ENCODE measurements at regions of chr22 and their contacts with region 1.

Region 1: DNA sequence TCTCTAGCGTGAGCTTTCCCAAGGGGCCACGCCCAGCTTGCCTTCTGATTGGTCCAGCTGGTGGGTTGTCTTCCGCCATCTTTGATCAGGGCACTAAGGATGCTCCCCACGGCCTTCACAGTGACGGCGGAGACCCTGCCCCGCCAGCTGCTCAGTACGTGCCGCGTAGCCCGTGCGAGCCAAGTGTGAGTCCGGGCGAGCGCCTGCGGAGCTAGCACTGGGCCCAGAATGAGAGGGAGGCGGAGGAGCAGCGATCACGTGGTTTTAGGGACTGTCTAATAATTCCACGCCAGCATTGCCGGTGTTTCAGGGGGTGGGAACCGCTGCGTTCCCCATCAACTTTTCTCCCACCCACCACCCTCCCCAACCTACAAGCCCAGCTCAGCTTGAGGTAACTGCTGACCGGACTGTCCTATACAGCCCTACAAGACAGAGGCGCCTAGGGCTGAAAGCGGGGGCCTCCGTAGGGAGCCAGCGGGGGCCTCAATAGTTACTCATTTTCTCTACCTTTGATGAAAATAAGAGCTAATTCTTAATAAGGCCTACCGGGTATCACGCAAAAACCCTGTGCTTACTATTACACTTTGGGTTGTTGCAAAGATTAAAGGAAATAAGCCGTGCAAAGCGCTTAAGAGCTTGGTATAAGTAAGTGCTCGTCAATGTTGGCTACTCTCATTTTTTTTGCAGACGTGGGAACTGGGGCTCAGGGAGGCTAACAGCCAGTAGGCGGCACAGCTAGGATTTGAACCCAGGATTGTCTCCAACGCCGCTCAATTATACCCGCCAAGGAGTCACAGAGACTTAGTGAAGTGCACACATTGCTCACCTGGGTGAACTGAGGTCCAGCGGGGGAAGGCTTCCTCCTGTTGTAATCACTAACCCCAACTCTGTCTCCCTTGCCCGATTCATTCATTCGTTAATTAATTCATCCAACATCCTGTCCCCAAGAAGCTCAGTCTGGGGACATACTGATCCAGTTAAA is 1.3 kb upstream of the MTFP1 start:
- DNase-seq: peak; percentile 98
- H3K4me3 ChIP-seq: peak overlapping the region in 2 of 3 experiments; percentile 26 to 37
- H3K27ac ChIP-seq: peak overlapping the region; percentile 94
- H3K4me1 ChIP-seq: peaks cover 76% of the 10 kb centered on the region
- H3K27me3 ChIP-seq: no peaks in the 10 kb centered on the region
- CTCF ChIP-seq: no peak

Region 2: GRCh38 chr22:30326706-30327362 is 97.4 kb before region 1 on chr22 and contains the start of gene TBC1D10A:
- CTCF ChIA-PET with region 1: no interaction called
- dilution Hi-C with region 1: loop called (anchors 5 kb)
- in situ Hi-C with region 1: no loop called
- intact Hi-C with region 1: no loop called
- DNase-seq: peak; percentile 93
- H3K4me3 ChIP-seq: peak within 1 kb of the TSS; percentile 86 to 95 (median 89)
- H3K27ac ChIP-seq: peak within 1 kb of the TSS; percentile 67
- H3K4me1 ChIP-seq: peaks cover 31% of the 10 kb centered on the region
- H3K27me3 ChIP-seq: no peaks in the 10 kb centered on the region
- CTCF ChIP-seq: no peak
- total RNA-seq, gene TBC1D10A: 25.7 to 27.5 TPM

Region 3: DNA sequence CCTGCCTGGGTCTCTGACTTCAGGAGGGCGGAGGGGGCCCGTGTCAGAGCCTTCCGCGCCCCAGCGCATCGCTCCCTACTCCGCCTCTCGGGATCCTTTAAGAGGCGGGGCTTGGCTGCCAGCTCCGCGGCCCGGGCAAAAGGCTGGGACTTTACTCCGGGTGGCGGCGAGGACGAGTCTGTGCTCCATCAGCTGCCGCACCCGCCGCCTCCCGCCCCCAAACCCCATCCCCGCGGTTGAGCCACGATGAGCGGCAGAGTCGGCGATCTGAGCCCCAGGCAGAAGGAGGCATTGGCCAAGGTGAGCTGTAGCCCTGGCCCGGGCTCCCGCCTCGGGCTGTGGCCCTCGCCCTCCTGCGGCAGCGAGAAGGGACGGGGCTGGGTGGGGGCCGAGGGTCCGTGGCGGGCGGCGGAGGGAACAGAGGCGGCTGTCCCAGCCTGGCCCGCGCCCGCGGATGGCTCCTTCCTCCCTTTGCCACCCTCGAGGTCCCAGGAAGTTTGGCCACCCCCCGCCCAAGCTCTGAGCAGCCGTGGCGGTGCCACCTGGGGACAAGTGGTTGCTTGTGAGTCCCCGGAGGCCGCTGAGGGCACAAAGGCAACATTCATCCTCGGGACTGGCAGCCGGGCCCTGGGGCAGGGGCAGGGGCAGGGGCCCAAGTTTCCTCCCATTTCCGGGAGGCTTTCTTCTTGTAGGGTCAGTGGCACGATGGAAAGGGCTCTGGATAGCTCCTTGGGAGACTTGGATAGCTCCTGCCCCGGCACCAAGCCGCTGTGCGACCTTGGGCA is 27.2 kb before region 1 on chr22 and contains the start of gene SEC14L2:
- CTCF ChIA-PET with region 1: interaction called, 3 read pairs
- dilution Hi-C with region 1: loop called (anchors 5 kb)
- in situ Hi-C with region 1: loop called in 1 of 2 experiments (anchors 5 kb)
- intact Hi-C with region 1: loop called (anchors 1 kb)
- DNase-seq: peak; percentile 57
- H3K4me3 ChIP-seq: peak within 1 kb of the TSS; percentile 60 to 94 (median 78)
- H3K27ac ChIP-seq: peak within 1 kb of the TSS; percentile 80
- H3K4me1 ChIP-seq: peaks cover 34% of the 10 kb centered on the region
- H3K27me3 ChIP-seq: no peaks in the 10 kb centered on the region
- CTCF ChIP-seq: no peak
- total RNA-seq, gene SEC14L2: 171 to 266 TPM

Region 4: GRCh38 chr22:30408414-30409104 is 15.7 kb before region 1 on chr22:
- CTCF ChIA-PET with region 1: no interaction called
- dilution Hi-C with region 1: no loop called
- in situ Hi-C with region 1: no loop called
- intact Hi-C with region 1: loop called (anchors 1 kb)
- DNase-seq: peak; percentile 93
- H3K4me3 ChIP-seq: no peak overlapping the region
- H3K27ac ChIP-seq: peak overlapping the region; percentile 48
- H3K4me1 ChIP-seq: peaks cover 71% of the 10 kb centered on the region
- H3K27me3 ChIP-seq: no peaks in the 10 kb centered on the region
- CTCF ChIP-seq: no peak

Region 5: GRCh38 chr22:30485362-30485988 is 61.2 kb after region 1 on chr22:
- CTCF ChIA-PET with region 1: no interaction called
- dilution Hi-C with region 1: no loop called
- in situ Hi-C with region 1: no loop called
- intact Hi-C with region 1: loop called (anchors 1 kb)
- DNase-seq: peak; percentile 35
- H3K4me3 ChIP-seq: no peak overlapping the region
- H3K27ac ChIP-seq: no peak overlapping the region
- H3K4me1 ChIP-seq: no peaks in the 10 kb centered on the region
- H3K27me3 ChIP-seq: no peaks in the 10 kb centered on the region
- CTCF ChIP-seq: peak; percentile 83 to 90

Region 6: GRCh38 chr22:30523776-30524489 is 99.7 kb after region 1 on chr22:
- CTCF ChIA-PET with region 1: no interaction called
- dilution Hi-C with region 1: loop called (anchors 5 kb)
- in situ Hi-C with region 1: no loop called
- intact Hi-C with region 1: no loop called
- DNase-seq: no peak
- H3K4me3 ChIP-seq: no peak overlapping the region
- H3K27ac ChIP-seq: no peak overlapping the region
- H3K4me1 ChIP-seq: no peaks in the 10 kb centered on the region
- H3K27me3 ChIP-seq: no peaks in the 10 kb centered on the region
- CTCF ChIP-seq: no peak

Measured in mammary epithelial cell (primary cell).